A673 (cell line): ENCODE measurements at regions of chr2 and their contacts with region 1.

Region 1: DNA sequence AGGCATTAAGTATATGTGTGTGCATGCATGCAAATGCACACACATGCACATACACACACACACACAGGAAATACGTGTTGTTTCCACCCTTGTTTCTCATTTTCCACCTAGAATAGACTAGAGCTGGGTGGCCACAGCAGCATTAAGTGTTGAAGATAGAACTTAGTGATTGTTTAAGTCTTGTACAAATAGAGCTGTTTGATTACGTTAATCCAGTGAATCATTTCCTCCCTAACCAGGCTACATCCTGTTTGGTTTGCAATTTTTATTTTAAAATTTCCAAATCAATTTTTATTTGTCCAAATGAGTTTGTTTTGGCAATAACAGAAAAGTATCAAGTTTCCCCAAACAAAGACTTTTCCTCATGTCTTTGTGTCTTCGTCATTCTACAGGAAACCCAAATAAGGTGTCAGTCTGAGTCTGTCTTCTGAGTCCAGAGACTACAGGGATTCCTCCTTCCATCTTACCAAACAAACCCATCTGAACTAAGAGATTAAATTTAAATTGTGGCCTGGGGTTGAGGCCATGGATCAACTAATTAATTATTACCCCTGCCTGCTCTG is 74.6 kb upstream of the GALNT5 start:
- DNase-seq: peak; percentile 88
- H3K4me3 ChIP-seq: peak overlapping the region; percentile 10
- H3K27ac ChIP-seq: peak overlapping the region; percentile 84
- H3K4me1 ChIP-seq: peaks cover 29% of the 10 kb centered on the region
- H3K27me3 ChIP-seq: no peaks in the 10 kb centered on the region
- CTCF ChIP-seq: no peak

Region 2: DNA sequence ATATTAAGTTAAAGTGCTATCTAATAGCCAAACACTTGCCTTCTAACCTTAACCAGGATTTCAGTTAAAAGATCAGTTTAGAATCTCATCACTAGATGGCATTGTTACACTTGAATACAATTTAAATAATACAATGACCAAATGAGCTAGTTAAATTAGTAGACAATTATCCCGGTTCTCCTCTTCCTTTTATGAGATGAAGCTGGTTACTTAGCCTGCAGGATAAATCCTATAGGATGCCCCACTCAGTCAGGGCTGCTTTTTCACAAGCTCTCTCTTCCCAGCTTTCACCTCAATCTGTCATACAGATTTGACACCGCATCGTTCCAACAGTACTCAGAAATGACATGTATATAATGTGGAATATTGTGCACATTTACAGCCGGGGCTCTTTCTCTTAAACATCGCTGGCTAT is 1805.6 kb before region 1 on chr2:
- CTCF ChIA-PET with region 1: interaction called, 22 read pairs
- POLR2A ChIA-PET with region 1: no interaction called
- intact Hi-C with region 1: no loop called
- DNase-seq: peak; percentile 25
- H3K4me3 ChIP-seq: no peak overlapping the region
- H3K27ac ChIP-seq: no peak overlapping the region
- H3K4me1 ChIP-seq: peaks cover 6% of the 10 kb centered on the region
- H3K27me3 ChIP-seq: no peaks in the 10 kb centered on the region
- CTCF ChIP-seq: peak; percentile 53; the same call in 1 of the 2 replicates

Region 3: DNA sequence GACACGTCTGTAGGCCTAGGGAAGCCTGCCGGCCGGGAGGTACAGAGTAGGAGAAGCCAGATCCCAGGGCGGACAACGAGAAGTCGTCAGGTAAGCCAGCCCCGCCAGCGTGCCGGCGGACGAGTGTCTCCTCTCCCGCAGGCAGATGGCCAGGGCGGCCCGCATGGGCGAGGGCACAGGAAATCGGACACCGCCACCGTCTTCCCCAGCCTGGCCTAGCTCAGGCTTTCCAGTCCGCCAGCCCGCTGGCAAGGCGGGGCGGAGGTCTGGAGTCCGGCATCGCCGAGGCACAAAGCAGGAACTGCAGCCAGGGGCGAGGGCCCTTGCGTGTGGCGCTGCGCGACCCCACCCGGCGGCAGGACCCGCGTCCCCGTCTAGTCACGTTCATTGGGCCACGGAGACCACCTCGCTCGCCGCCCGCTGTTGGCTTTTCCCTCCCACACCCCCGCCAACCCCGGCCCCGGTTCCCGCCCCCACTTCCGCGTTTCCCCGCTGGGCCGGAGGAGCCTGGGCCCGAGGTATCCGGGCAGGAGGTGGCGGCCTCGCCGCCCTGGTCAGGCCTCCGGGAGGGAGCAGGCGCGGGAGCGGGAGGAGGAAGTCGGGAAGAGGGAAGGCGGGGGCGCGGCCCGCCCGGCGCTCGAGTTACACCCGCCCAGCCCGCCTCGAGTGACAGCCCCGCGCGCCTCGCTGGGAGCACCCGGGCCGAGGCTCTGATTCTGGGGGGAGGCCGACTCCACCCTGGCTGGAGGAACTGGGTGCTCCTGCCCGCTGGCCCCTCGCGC is 747.0 kb before region 1 on chr2 and contains the start of gene GPD2:
- CTCF ChIA-PET with region 1: no interaction called
- POLR2A ChIA-PET with region 1: no interaction called
- intact Hi-C with region 1: loop called (anchors 10 kb)
- DNase-seq: peak; percentile 84
- H3K4me3 ChIP-seq: peak within 1 kb of the TSS; percentile 55
- H3K27ac ChIP-seq: peak within 1 kb of the TSS; percentile 81
- H3K4me1 ChIP-seq: peaks cover 21% of the 10 kb centered on the region
- H3K27me3 ChIP-seq: no peaks in the 10 kb centered on the region
- CTCF ChIP-seq: no peak
- total RNA-seq, gene GPD2: 33.9 and 39.4 TPM in 2 replicates

Region 4: DNA sequence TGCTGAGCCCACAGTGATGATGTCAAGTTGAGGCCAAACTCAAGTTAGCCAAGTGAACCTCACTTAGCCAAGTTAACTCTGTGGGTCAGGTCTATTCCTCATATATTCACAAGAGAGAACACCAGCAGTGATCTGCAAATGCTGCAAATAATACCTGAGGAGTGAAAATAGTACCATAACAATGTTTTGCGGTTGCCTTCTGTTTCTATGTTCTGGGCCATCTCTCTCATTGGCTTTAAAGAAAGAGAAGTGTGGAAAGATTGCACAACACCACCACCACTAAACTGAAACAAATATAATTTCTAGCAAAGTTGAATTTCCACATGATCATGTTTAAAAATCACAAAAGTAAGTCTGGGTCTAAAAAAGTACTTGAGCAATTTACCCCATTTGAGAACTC is 136.5 kb before region 1 on chr2:
- CTCF ChIA-PET with region 1: no interaction called
- POLR2A ChIA-PET with region 1: no interaction called
- intact Hi-C with region 1: loop called (anchors 5 kb)
- DNase-seq: no peak
- H3K4me3 ChIP-seq: no peak overlapping the region
- H3K27ac ChIP-seq: no peak overlapping the region
- H3K4me1 ChIP-seq: peaks cover 12% of the 10 kb centered on the region
- H3K27me3 ChIP-seq: peaks cover 6% of the 10 kb centered on the region
- CTCF ChIP-seq: no peak

Region 5: GRCh38 chr2:157105372-157105771 is 77.5 kb before region 1 on chr2:
- CTCF ChIA-PET with region 1: interaction called, 13 read pairs
- POLR2A ChIA-PET with region 1: no interaction called
- intact Hi-C with region 1: no loop called
- DNase-seq: no peak
- H3K4me3 ChIP-seq: no peak overlapping the region
- H3K27ac ChIP-seq: no peak overlapping the region
- H3K4me1 ChIP-seq: no peaks in the 10 kb centered on the region
- H3K27me3 ChIP-seq: no peaks in the 10 kb centered on the region
- CTCF ChIP-seq: no peak

Region 6: GRCh38 chr2:157302492-157303099 is 119.7 kb after region 1 on chr2:
- CTCF ChIA-PET with region 1: interaction called, 12 read pairs
- POLR2A ChIA-PET with region 1: no interaction called
- intact Hi-C with region 1: no loop called
- DNase-seq: peak; percentile 70
- H3K4me3 ChIP-seq: no peak overlapping the region
- H3K27ac ChIP-seq: no peak overlapping the region
- H3K4me1 ChIP-seq: no peaks in the 10 kb centered on the region
- H3K27me3 ChIP-seq: peaks cover 48% of the 10 kb centered on the region
- CTCF ChIP-seq: peak; percentile 81

Region 7: DNA sequence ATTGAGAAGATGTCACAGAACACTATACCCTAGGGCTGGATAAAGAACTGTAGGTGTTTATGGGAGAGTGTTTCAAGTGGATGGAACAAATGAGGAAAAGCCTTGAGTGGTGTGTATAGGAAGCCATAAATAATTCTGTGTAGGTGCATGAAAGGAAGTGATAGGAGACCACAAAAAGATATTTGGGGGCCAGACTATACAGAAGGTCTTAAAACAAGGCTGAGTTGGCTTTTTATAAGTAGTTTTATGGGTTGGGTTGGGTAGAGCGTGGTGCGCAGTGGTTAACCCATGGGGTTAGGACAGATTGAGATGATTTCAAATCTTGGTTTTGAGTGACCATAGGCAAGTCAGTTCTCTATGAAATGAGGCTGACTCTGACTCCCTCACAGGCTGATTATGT is 1384.3 kb after region 1 on chr2:
- CTCF ChIA-PET with region 1: no interaction called
- POLR2A ChIA-PET with region 1: no interaction called
- intact Hi-C with region 1: no loop called
- DNase-seq: no peak
- H3K4me3 ChIP-seq: no peak overlapping the region
- H3K27ac ChIP-seq: no peak overlapping the region
- H3K4me1 ChIP-seq: no peaks in the 10 kb centered on the region
- H3K27me3 ChIP-seq: no peaks in the 10 kb centered on the region
- CTCF ChIP-seq: no peak